Left colon (tissue), 2 donors: ENCODE measurements at regions of chr12 and their contacts with region 1.

Region 1: DNA sequence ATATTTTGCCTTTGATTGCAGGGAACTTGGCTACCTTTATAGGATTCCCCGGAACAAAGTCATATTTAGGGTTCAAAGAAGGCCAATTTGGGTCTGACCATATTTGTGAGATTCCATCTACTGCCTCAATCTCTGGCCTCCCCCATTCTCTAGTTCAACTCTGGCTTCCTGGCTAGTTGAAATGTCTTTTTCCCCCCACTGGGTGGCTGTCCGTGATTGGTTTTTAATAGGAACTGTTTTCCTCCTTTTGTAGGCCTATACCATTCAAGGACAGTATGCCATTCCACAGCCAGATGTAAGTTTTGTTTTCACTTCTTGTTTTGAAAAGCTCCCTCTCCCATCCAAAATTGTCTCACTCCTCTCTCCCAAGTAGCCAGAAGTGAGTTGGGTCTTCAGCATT is 13.8 kb downstream of the PCBP2 start:
- DNase-seq: no peak
- ATAC-seq: no peak

Region 2: GRCh38 chr12:53231826-53232645 is 233.6 kb before region 1 on chr12 and contains the start of gene RARG:
- intact Hi-C with region 1: no loop called
- DNase-seq: peak; percentile 66 to 69
- ATAC-seq: peak; percentile 53
- total RNA-seq, gene RARG: 10.2 to 12.3 TPM

Region 3: DNA sequence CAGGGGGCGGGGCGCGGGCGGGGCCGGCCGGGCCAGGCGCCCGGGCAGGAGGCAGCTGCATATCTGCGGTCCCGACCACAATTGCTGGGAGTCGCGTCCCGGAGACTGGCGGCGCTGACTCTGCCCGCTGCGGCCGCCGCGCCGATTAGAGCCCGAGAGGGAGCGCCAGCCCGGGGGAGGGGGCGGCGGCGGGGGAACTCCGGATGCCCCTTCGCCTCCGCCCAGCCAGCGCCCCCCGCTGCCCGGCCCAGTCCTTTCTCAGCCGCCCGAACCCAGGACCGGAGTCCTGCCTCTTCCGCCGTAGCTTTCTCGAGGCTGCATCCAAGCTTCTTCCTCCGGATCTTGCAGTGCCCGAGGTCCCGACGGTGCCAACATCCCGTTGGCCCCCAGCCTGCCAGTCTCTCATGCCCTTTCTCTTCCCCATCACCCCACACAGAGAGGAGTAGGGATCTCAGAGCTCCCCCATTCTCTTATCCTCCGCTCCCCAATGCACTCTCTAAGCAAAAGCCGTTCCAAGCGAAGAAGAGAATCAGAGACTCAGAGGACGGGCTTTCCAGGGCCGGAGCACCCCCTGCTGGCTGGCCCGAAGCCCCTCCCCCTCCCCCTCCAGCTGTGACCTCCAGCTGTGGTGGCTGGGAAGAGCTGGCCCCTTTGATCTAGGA is 120.7 kb before region 1 on chr12:
- intact Hi-C with region 1: no loop called
- DNase-seq: peak; percentile 71 to 80
- ATAC-seq: peak; percentile 92

Region 4: DNA sequence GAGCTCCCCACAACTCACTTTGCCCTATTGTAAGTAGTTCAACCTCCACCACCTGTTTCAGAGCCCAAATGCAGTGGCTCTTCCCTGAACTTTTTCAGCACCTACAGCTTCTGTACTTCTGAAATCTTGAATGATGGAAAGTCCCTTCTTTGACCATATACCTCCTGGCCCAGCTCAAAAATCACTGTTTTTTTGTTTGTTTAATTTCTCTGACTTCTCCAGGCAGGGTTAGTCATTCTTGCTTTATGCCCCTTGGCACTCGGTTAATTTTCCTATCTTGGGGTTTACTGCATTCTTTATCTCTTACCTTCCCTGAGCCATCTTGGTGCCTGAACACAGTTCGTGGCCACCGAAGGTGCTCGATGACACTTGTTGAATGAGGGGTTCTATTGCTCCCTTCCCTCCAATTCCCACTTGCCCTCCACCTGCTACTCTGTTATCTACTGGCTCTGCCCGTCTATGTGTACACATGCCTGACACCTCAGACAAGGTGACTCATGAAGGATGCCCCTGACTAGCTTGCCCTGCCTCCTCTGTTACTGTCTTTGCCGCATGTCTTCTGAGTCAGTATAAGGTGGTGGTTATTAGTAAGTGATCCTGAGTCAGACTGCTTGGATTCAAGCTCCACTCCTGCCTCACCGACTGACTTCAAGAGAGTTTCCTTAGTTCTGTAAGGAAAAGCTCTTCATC is 37.6 kb before region 1 on chr12:
- intact Hi-C with region 1: no loop called
- DNase-seq: no peak
- ATAC-seq: peak; percentile 82

Region 5: DNA sequence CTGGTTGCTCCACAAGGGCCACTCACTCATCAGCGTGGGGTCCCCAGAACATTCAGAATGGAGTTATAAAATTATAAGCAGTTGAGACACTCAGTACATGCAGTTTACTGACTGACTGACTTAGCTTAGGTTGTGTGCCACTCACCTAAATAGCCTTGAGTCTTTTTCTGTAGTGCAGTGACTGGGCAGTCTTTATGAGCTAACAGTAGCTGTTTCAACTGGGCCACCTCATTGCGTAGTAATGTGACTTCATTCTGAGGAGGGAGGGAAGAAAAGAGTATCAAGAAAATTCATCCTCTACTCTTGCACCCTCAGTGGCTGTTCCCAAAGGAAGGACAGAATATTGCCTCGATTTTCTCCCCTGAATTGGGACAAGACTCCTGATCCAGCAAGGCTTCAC is 57.5 kb after region 1 on chr12:
- intact Hi-C with region 1: loop called in 1 of 2 experiments (anchors 10 kb)
- DNase-seq: no peak
- ATAC-seq: no peak